Natural killer cell (primary cell): ENCODE measurements at regions of chr2 and their contacts with region 1.

Region 1: DNA sequence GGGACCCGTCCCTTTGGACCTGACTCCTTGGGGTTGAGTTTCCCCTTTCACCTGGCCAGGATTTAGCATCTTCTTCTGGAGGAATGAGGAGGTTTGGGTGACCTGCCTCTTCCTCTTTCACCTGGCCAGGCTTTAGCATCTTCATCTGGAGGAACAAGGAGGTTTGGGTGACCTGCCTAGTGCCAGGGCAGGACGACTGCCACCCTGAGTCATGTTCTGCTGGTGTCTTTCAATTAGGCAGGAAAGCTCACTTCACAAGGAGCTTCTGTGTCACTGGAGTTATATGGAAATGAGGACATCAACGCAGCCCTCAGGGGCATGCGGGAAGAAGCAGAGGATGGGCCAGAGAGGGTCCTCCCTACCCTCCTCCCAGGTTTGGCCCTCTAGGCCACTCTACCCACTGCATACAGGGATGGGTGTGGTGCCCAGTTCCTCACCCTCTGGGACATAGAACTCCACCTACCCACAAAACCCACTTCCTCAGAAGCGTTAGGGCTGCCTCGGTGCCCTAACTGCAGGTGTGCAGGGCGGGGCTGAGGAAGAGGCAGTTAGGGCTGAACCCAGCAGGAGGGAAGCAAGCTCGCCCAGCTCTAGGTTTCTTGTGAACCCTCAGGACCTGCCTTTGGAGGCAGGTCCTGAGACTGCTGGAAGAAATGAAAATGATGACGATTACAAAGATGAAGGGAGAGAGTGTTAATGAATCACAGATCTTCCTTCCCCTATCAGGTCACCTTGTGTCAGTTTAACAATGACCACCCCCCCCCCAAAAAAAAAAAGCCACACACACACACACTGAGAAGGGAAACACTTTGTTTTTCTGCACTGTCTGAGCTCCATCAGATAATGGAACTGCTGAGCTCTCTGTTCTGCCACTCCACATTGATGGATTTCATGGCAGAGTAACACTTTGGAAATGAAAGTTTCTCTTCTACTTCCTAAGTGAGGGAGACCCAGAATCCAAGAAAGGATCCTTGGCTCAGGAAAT is 71.0 kb downstream of the ARL4C start:
- DNase-seq: peak; percentile 56 to 93
- ATAC-seq: peak; percentile 49 to 68 (median 57)
- H3K4me3 ChIP-seq: no peak overlapping the region
- H3K4me3 Mint-ChIP-seq: peak overlapping the region; percentile 80
- H3K27ac ChIP-seq: peak overlapping the region; percentile 98
- H3K27ac Mint-ChIP-seq: peak overlapping the region; percentile 98 to 100
- H3K4me1 ChIP-seq: peaks cover 89% of the 10 kb centered on the region
- H3K4me1 Mint-ChIP-seq: peaks cover 90% of the 10 kb centered on the region in 2 donors
- H3K27me3 ChIP-seq: no peaks in the 10 kb centered on the region
- H3K27me3 Mint-ChIP-seq: no peaks in the 10 kb centered on the region
- CTCF ChIP-seq: no peak

Region 2: GRCh38 chr2:233990261-233990798 is 435.6 kb before region 1 on chr2:
- intact Hi-C with region 1: loop called (anchors 10 kb)
- DNase-seq: peak; percentile 65 to 90
- ATAC-seq: peak; percentile 85 to 92 (median 86)
- H3K4me3 ChIP-seq: no peak overlapping the region
- H3K4me3 Mint-ChIP-seq: peak overlapping the region; percentile 45
- H3K27ac ChIP-seq: peak overlapping the region; percentile 66
- H3K27ac Mint-ChIP-seq: peak overlapping the region; percentile 59 to 86
- H3K4me1 ChIP-seq: peaks cover 56% of the 10 kb centered on the region
- H3K4me1 Mint-ChIP-seq: peaks cover 48 to 50% of the 10 kb centered on the region in 2 donors
- H3K27me3 ChIP-seq: no peaks in the 10 kb centered on the region
- H3K27me3 Mint-ChIP-seq: peaks cover 0 to 5% of the 10 kb centered on the region in 2 donors
- CTCF ChIP-seq: no peak

Region 3: GRCh38 chr2:234032279-234032856 is 393.5 kb before region 1 on chr2:
- intact Hi-C with region 1: loop called (anchors 5 kb)
- DNase-seq: peak in 1 of 2 donors; percentile 80
- ATAC-seq: peak; percentile 73 to 90 (median 83)
- H3K4me3 ChIP-seq: no peak overlapping the region
- H3K4me3 Mint-ChIP-seq: peak overlapping the region; percentile 71
- H3K27ac ChIP-seq: peak overlapping the region; percentile 58
- H3K27ac Mint-ChIP-seq: peak overlapping the region; percentile 83 to 85
- H3K4me1 ChIP-seq: peaks cover 37% of the 10 kb centered on the region
- H3K4me1 Mint-ChIP-seq: peaks cover 59 to 62% of the 10 kb centered on the region in 2 donors
- H3K27me3 ChIP-seq: no peaks in the 10 kb centered on the region
- H3K27me3 Mint-ChIP-seq: no peaks in the 10 kb centered on the region
- CTCF ChIP-seq: no peak

Region 4: DNA sequence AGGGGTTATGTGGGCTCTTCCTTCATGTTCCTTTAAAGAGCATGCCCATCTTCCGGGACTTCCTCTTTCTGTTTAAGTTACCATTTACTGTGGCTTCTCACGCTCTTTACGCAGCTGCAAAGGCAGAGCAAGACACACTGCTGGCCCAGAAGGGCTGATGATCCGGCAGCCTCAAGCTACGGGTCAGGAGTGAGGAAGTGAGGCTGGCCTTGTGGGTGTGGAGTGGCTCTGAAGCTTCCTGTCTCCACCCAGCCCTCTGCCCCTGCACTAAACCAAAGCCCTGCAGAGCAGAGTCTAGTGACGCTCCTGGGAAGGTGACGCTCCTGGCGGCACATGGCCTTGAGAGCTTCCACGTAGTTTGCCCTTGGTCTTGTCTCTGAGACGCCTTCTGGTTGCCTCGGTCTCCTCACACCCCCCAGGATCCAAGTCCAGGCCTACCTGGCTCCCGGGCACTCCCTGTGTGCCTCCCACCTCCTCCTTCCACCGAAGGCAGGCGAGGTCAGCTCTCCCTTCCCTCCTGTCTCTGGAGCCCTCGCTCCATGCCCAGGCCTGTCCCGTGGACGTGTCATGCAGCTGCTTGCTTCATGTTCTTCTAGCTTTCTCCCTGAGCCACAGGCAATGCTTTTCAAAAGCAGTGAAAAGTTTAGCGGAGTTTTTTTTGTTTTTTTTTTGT is 20.6 kb after region 1 on chr2:
- intact Hi-C with region 1: loop called (anchors 1 kb)
- DNase-seq: peak; percentile 76 to 94
- ATAC-seq: peak; percentile 89 to 95 (median 92)
- H3K4me3 ChIP-seq: no peak overlapping the region
- H3K4me3 Mint-ChIP-seq: peak overlapping the region; percentile 82
- H3K27ac ChIP-seq: peak overlapping the region; percentile 97
- H3K27ac Mint-ChIP-seq: peak overlapping the region; percentile 98 to 99
- H3K4me1 ChIP-seq: peaks cover 52% of the 10 kb centered on the region
- H3K4me1 Mint-ChIP-seq: peaks cover 69 to 71% of the 10 kb centered on the region in 2 donors
- H3K27me3 ChIP-seq: no peaks in the 10 kb centered on the region
- H3K27me3 Mint-ChIP-seq: no peaks in the 10 kb centered on the region
- CTCF ChIP-seq: no peak

Region 5: GRCh38 chr2:234463626-234464290 is 37.8 kb after region 1 on chr2:
- intact Hi-C with region 1: loop called (anchors 5 kb)
- DNase-seq: peak in 1 of 2 donors; percentile 92
- ATAC-seq: peak; percentile 61 to 78 (median 67)
- H3K4me3 ChIP-seq: no peak overlapping the region
- H3K4me3 Mint-ChIP-seq: peak overlapping the region; percentile 73
- H3K27ac ChIP-seq: peak overlapping the region; percentile 65
- H3K27ac Mint-ChIP-seq: peak overlapping the region; percentile 76 to 80
- H3K4me1 ChIP-seq: peaks cover 37% of the 10 kb centered on the region
- H3K4me1 Mint-ChIP-seq: peaks cover 42 to 57% of the 10 kb centered on the region in 2 donors
- H3K27me3 ChIP-seq: no peaks in the 10 kb centered on the region
- H3K27me3 Mint-ChIP-seq: no peaks in the 10 kb centered on the region
- CTCF ChIP-seq: no peak

Region 6: DNA sequence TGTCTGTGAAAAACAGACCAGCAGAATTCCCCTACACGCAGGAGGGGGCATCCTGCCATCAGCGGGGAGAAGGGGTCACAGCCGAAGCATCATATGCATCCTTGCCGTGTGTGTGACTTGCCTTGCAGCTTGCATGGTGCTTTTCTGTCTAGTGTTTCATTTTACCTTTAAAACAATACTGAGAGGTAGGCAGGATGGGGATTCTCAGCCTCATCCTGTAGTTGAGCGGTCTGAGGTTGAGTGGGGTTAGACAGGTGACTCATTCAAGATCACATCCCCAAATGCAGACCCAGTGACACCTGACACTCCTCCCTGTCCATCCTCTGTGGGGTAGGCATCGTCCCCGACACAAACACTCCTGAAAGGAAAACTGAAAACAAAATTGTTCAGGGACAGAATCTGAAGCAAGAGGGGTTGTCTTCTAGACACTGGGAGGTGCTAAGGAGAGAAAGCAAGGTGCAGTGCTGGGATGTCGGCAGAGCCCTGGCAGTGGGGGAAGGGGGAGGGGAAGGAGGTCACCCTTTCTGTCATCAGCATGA is 63.1 kb after region 1 on chr2:
- intact Hi-C with region 1: loop called (anchors 1 kb)
- DNase-seq: peak; percentile 51 to 93
- ATAC-seq: peak; percentile 55 to 62 (median 56)
- H3K4me3 ChIP-seq: no peak overlapping the region
- H3K4me3 Mint-ChIP-seq: peak overlapping the region; percentile 100
- H3K27ac ChIP-seq: peak overlapping the region; percentile 94
- H3K27ac Mint-ChIP-seq: peak overlapping the region; percentile 95 to 99
- H3K4me1 ChIP-seq: peaks cover 82% of the 10 kb centered on the region
- H3K4me1 Mint-ChIP-seq: peaks cover 89 to 92% of the 10 kb centered on the region in 2 donors
- H3K27me3 ChIP-seq: no peaks in the 10 kb centered on the region
- H3K27me3 Mint-ChIP-seq: no peaks in the 10 kb centered on the region
- CTCF ChIP-seq: no peak